Dendritic cell treated with granulocyte-macrophage colony-stimulating factor and Interleukin-4, amounts not matched to agents 40 ng/mL and 50 ng/mL, for 4 days (primary cell): ENCODE measurements at regions of chr16 and their contacts with region 1.

Region 1: GRCh38 chr16:1363501-1364041 is 11.8 kb downstream of the GNPTG start:
- H3K4me3 Mint-ChIP-seq: no peak overlapping the region
- H3K27ac Mint-ChIP-seq: no peak overlapping the region
- H3K4me1 Mint-ChIP-seq: peaks cover 12% of the 10 kb centered on the region
- H3K27me3 Mint-ChIP-seq: no peaks in the 10 kb centered on the region

Region 2: DNA sequence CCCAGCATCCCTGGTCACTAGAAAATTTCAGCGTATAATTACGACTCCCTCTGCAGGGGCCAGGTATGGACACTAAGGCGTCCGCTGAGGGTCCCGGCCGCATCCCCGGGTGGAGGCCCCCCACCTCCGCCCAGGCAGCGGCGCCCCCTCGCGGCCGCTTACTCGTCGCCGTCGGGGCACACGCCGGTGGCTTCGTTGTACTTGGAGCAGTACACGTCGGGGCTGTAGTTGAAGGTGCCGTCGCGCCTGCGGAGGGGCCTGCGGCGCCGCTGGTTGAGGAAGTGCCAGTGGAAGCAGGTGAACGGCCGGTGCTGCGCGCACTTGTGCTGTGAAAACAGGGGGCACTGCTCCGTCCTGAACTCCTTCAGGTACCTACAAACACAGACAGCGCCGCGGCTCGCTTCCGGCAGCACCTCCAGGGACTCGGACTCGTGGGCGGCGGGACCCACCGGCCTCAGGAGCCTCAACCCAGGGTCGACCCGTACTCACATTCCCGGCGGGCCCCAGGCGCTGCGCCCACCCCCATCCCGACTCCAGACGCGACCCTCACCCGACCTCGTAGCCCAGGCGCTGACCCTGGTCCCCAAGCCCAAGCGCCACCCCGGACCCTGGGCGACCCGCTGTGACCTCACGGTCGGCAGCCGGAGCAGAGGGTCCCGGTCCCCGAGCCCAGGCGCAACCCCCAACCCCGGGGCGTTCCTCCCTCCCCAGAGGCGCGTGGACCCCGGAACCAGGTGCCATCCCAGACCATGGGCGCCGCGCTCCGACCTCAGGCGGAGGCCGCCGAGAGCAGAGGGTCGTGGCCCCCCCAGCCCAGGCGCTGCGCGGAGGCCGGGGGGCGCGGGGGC is 50.3 kb after region 1 on chr16:
- intact Hi-C with region 1: loop called (anchors 10 kb)
- H3K4me3 Mint-ChIP-seq: peak overlapping the region; percentile 82
- H3K27ac Mint-ChIP-seq: peak overlapping the region; percentile 79
- H3K4me1 Mint-ChIP-seq: peaks cover 23% of the 10 kb centered on the region
- H3K27me3 Mint-ChIP-seq: no peaks in the 10 kb centered on the region